HEK293 (cell line): ENCODE measurements at regions of chr10 and their contacts with region 1.

Region 1: DNA sequence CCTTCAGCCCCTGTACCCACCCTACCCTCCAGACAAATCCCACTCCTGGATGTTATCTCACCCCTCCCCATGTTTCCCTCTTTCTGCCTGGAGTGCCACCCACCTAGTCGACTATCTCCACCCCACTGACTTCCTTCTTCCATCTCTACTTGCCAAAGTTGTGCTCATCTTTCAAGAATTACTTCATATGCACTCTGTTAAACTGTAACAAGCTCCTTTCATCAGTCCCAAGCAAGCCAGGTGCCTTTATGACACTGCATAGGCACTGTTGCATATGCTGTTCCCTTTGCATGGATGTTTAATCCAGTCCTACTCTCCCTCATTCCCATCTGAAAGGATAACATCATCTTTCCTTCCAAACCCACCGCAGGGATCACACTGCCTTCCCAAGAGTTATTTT is 8.9 kb upstream of the CDK1 start:
- H3K4me3 ChIP-seq: no peak overlapping the region
- H3K27ac ChIP-seq: no peak overlapping the region
- H3K4me1 ChIP-seq: no peaks in the 10 kb centered on the region
- CTCF ChIP-seq: no peak

Region 2: DNA sequence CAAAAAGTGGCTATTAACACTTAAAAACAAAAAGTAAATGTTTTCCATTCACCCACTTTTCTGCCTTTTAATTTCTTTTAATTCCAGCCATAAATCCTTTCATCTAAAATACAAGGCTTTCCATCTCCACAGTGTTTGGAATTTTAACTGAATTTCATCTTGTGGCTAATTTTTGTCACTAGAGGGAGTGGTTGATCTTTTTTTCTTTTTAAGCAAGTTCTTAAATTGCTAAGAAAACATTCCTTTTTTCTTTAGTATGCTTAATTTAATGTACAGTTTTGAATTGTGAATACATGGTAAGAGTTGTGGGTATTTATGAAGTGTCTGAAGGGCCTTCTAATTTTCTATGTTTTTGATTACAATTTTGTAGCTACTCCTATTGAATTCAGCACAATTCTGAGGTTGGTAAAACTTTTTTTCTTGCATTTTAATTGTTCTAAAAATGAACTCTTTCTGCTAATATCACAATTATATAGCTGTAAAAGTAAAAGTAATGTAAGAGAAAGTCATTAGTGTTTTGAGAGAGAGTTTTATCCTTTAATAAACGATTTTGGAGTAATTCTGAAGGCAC is 324.8 kb before region 1 on chr10:
- CTCF ChIA-PET with region 1: interaction called, 24 read pairs
- POLR2A ChIA-PET with region 1: no interaction called
- H3K4me3 ChIP-seq: no peak overlapping the region
- H3K27ac ChIP-seq: no peak overlapping the region
- H3K4me1 ChIP-seq: no peaks in the 10 kb centered on the region; the same call in 1 of the 2 replicates
- CTCF ChIP-seq: peak; percentile 42; the same call in 1 of the 2 replicates

Region 3: GRCh38 chr10:60646966-60647796 is 122.2 kb before region 1 on chr10:
- CTCF ChIA-PET with region 1: interaction called, 34 read pairs
- POLR2A ChIA-PET with region 1: interaction called, 4 read pairs
- H3K4me3 ChIP-seq: no peak overlapping the region
- H3K27ac ChIP-seq: no peak overlapping the region
- H3K4me1 ChIP-seq: peaks cover 7% of the 10 kb centered on the region; the same call in 1 of the 2 replicates
- CTCF ChIP-seq: peak; percentile 52; the same call in 1 of the 2 replicates

Region 4: DNA sequence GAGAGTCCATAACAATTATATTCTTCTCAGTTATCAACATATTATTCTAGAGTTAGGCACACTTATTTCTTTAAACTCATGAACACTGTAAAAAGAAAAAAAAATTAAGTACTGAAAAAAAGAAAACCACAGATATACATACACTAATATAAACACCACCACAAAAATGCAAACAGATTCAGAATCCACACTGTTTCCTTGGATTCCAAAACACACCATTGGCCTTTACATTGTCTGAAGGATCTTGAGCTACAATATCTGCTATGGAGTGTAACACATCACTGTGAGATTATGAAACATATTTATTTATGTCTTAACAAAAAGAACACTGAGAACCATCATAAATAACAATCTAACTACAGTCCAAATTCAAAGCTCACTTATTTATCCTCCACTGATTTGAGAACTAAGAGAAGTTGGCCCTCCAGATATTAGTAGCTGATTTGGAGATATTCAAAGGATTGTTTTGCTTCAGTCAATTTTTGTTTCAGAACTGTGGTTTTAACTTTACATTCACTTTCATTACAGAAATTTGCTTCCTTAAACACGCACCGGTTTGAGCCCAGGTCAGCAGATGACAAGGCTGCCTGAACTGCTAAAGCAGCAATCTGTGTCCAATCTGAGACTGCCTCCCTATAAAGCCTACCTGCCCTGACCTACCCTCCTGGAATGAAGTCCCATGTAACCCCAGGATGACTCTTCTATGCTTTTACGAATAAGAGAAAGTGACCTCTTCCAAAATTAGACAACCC is 38.1 kb before region 1 on chr10:
- CTCF ChIA-PET with region 1: interaction called, 21 read pairs
- POLR2A ChIA-PET with region 1: no interaction called
- H3K4me3 ChIP-seq: peak overlapping the region; percentile 6
- H3K27ac ChIP-seq: peak overlapping the region; percentile 4; the same call in 1 of the 2 replicates
- H3K4me1 ChIP-seq: peaks cover 9% of the 10 kb centered on the region; the same call in 1 of the 2 replicates
- CTCF ChIP-seq: no peak

Region 5: GRCh38 chr10:60747817-60748469 is 21.5 kb before region 1 on chr10:
- CTCF ChIA-PET with region 1: interaction called, 12 read pairs
- POLR2A ChIA-PET with region 1: no interaction called
- H3K4me3 ChIP-seq: no peak overlapping the region
- H3K27ac ChIP-seq: no peak overlapping the region
- H3K4me1 ChIP-seq: no peaks in the 10 kb centered on the region
- CTCF ChIP-seq: no peak

Region 6: GRCh38 chr10:60784641-60785040 is 15.2 kb after region 1 on chr10:
- CTCF ChIA-PET with region 1: no interaction called
- POLR2A ChIA-PET with region 1: no interaction called
- H3K4me3 ChIP-seq: no peak overlapping the region
- H3K27ac ChIP-seq: no peak overlapping the region
- H3K4me1 ChIP-seq: 0 out of 2 replicates have a peak, but pooled peaks cover 4% of the 10 kb centered on the region
- CTCF ChIP-seq: no peak